ENCODE measurements at regions of chr1 and their contacts with region 1.

Region 1: GRCh38 chr1:170402476-170403311 is 129.3 kb upstream of the GORAB start:
- DNase-seq: no peak
- ATAC-seq: peak in 1 of 2 donors; percentile 43
- H3K4me3 ChIP-seq: no peak overlapping the region
- H3K27ac ChIP-seq: no peak overlapping the region
- H3K4me1 ChIP-seq: no peaks in the 10 kb centered on the region
- H3K27me3 ChIP-seq: no peaks in the 10 kb centered on the region

Region 2: GRCh38 chr1:170214117-170215032 is 188.3 kb before region 1 on chr1:
- intact Hi-C with region 1: loop called in 1 of 4 experiments (anchors 10 kb)
- DNase-seq: peak in 2 of 3 donors; percentile 46 to 50
- ATAC-seq: peak; percentile 48 to 52
- H3K4me3 ChIP-seq: no peak overlapping the region
- H3K27ac ChIP-seq: peak overlapping the region; percentile 20
- H3K4me1 ChIP-seq: peaks cover 2% of the 10 kb centered on the region
- H3K27me3 ChIP-seq: no peaks in the 10 kb centered on the region

Region 3: DNA sequence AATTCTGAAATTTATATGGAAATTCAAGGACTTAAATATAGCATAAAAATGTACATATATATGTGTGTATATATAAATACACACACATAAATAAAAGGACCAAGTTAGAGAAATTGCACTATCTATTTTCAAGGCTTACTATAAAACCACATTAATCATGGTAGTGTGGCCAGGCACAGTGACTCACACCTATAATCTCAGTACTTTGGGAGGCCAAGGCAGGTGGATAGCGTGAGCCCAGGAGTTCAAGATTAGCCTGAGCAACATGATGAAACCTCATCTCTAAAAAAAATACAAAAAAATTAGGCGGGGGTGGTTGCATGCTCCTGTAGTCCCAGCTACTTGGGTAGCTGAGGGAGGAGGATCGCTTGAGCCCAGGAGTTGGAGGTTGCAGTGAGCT is 42.1 kb before region 1 on chr1:
- intact Hi-C with region 1: no loop called
- DNase-seq: no peak
- ATAC-seq: no peak
- H3K4me3 ChIP-seq: no peak overlapping the region
- H3K27ac ChIP-seq: no peak overlapping the region
- H3K4me1 ChIP-seq: no peaks in the 10 kb centered on the region
- H3K27me3 ChIP-seq: no peaks in the 10 kb centered on the region